ENCODE measurements at regions of chr4 and their contacts with region 1.

Region 1: GRCh38 chr4:74874753-74875367 is 58.1 kb upstream of the PARM1 start:
- DNase-seq: peak; percentile 13
- ATAC-seq: peak; percentile 95
- H3K4me3 Mint-ChIP-seq: no peak overlapping the region
- H3K27ac Mint-ChIP-seq: no peak overlapping the region
- H3K4me1 Mint-ChIP-seq: peaks cover 21% of the 10 kb centered on the region
- H3K27me3 Mint-ChIP-seq: no peaks in the 10 kb centered on the region; the same call in 1 of the 2 replicates
- CTCF ChIP-seq: peak; percentile 88

Region 2: DNA sequence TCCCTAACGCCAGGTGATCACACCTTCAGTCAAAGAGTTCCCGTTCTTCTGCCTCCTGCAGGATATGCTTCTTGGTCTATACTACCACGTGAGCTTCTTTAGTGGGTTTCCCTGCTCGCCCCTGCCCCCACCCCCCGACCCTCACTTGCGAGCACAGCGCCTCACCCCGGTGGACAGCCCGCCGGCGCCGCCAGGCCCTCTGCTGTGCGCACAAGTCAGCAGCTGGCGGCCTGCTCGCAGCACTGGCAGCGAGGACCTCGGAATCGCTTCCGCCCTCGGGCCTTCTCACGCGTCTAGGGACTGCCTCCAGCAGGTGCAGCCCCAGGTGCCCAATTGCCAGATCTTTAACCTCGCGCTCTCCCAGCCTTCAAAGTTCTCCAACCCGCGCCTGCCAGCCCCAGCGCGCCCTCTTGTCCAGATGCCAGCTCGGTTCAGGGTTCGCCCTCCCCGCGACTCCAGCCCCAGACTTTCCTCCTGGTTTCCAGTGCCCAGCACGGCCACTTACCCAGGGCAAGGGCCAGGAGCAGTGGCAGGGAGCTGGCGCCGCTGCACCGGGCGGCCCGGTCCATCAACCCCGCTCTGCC is 81.0 kb before region 1 on chr4:
- CTCF ChIA-PET with region 1: interaction called, 18 read pairs
- POLR2A ChIA-PET with region 1: no interaction called
- DNase-seq: peak; percentile 79
- ATAC-seq: peak; percentile 87
- H3K4me3 Mint-ChIP-seq: peak overlapping the region; percentile 79
- H3K27ac Mint-ChIP-seq: no peak overlapping the region
- H3K4me1 Mint-ChIP-seq: peaks cover 20% of the 10 kb centered on the region
- H3K27me3 Mint-ChIP-seq: peaks cover 31% of the 10 kb centered on the region
- CTCF ChIP-seq: no peak

Region 3: GRCh38 chr4:74893171-74893570 is 18.3 kb after region 1 on chr4:
- CTCF ChIA-PET with region 1: interaction called, 19 read pairs
- POLR2A ChIA-PET with region 1: no interaction called
- DNase-seq: no peak
- ATAC-seq: no peak
- H3K4me3 Mint-ChIP-seq: no peak overlapping the region
- H3K27ac Mint-ChIP-seq: no peak overlapping the region
- H3K4me1 Mint-ChIP-seq: peaks cover 27% of the 10 kb centered on the region
- H3K27me3 Mint-ChIP-seq: no peaks in the 10 kb centered on the region
- CTCF ChIP-seq: no peak

Region 4: DNA sequence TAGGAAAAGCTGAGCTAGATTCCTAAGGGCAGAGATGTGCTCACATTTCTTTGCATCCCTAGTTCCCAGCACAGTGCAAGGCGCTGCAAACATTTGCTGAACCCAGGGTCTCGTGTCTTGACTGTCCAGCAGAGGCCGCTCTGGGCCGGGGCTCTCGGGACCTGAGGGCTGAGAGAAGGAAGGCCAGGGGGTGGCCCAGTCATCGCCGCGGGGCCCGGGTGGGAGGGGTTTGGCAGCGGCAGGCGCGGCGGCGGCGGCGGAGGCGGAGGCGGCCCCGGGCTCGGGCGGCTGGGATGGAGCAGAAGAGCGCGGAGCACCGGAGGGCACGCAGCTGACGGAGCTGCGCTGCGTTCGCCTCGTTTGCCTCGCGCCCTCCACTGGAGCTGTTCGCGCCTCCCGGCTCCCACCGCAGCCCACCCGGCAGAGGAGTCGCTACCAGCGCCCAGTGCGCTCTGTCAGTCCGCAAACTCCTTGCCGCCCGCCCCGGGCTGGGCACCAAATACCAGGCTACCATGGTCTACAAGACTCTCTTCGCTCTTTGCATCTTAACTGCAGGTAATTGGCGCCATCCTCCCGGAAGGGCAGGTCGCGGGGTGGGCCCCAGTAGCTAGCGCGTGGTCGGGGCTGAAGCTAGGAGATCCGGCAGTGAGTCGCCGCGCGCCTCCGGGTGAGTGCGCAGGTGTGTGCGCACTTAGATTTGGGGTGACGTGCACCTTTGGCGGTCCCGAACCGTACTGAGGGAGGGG is 58.1 kb after region 1 on chr4 and contains the start of gene PARM1:
- CTCF ChIA-PET with region 1: interaction called, 23 read pairs
- POLR2A ChIA-PET with region 1: no interaction called
- DNase-seq: peak; percentile 97
- ATAC-seq: peak; percentile 85
- H3K4me3 Mint-ChIP-seq: peak within 1 kb of the TSS; percentile 89
- H3K27ac Mint-ChIP-seq: no peak within 1 kb of the TSS
- H3K4me1 Mint-ChIP-seq: peaks cover 34% of the 10 kb centered on the region
- H3K27me3 Mint-ChIP-seq: peaks cover 43% of the 10 kb centered on the region
- CTCF ChIP-seq: peak; percentile 49; the same call in 1 of the 2 replicates
- total RNA-seq, gene PARM1: 3.5 to 6.3 TPM (median 4.1 TPM) in 3 replicates

Region 5: GRCh38 chr4:75289914-75290582 is 415.2 kb after region 1 on chr4:
- CTCF ChIA-PET with region 1: interaction called, 13 read pairs
- POLR2A ChIA-PET with region 1: no interaction called
- DNase-seq: peak; percentile 53
- ATAC-seq: peak; percentile 100
- H3K4me3 Mint-ChIP-seq: no peak overlapping the region
- H3K27ac Mint-ChIP-seq: no peak overlapping the region
- H3K4me1 Mint-ChIP-seq: peaks cover 10% of the 10 kb centered on the region
- H3K27me3 Mint-ChIP-seq: no peaks in the 10 kb centered on the region
- CTCF ChIP-seq: no peak

Measured in WTC11 (cell line).